Posterior cingulate gyrus (tissue), 11 donors: ENCODE measurements at regions of chr2 and their contacts with region 1.

Region 1: GRCh38 chr2:96509114-96509846 is 4.1 kb upstream of the NEURL3 start:
- DNase-seq: peak; percentile 78 to 98 (median 91)

Region 2: GRCh38 chr2:95578539-95578938 is 930.7 kb before region 1 on chr2:
- intact Hi-C with region 1: no loop called
- DNase-seq: no peak

Region 3: GRCh38 chr2:96305091-96305978 is 203.9 kb before region 1 on chr2 and contains the start of gene SNRNP200:
- intact Hi-C with region 1: loop called (anchors 1 kb)
- DNase-seq: peak; percentile 86 to 99 (median 92)

Region 4: GRCh38 chr2:96359310-96359709 is 150.0 kb before region 1 on chr2:
- intact Hi-C with region 1: loop called (anchors 1 kb)
- DNase-seq: peak; percentile 35 to 95 (median 72)

Region 5: GRCh38 chr2:96407041-96407918 is 102.0 kb before region 1 on chr2:
- intact Hi-C with region 1: loop called (anchors 1 kb)
- DNase-seq: peak; percentile 57 to 96 (median 70)

Region 6: DNA sequence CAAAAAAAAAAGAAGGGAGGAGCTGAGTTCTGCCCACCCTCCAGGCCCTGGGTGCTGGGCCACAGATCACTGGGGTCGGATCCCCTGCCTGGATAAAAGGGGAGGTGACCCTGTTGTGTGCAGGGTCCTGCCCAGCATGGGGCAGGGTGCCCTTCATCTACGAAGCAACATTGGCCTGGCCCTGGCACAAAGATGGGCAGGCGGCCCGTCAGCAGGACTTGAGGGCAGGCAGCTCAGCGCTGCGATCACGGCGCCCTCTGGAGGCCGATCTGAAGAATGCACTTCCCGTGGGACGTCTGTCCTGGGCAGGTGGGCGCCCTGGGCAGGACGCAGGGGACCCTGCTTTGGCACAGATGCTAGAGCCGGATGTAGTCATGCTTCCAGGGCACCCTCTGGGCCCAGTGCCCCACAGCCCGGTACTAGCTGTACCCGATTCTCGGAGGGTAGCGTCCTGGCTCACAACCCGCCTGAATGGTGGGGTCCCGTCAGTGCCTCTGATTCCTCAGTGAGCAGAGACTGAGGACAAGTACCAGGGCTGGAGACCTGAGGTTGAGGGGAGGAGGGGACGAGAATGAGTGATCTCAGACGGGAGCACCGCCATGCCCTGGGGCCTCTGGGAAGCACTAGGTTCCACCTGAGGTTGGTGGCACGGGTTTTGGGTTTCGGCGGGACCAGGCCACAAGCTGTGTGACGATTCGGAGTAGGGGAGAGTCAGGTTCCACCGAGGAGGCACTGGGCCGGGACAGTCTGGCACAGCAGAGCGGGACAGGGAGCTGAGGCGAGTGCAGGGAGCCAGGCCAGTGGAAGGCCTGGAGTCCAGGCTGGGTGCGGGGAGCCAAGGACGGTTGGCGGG is 45.2 kb after region 1 on chr2:
- intact Hi-C with region 1: loop called (anchors 1 kb)
- DNase-seq: peak; percentile 55 to 97 (median 78)

Region 7: GRCh38 chr2:96565111-96565510 is 55.8 kb after region 1 on chr2:
- intact Hi-C with region 1: no loop called
- DNase-seq: no peak

Region 8: GRCh38 chr2:96739633-96740428 is 230.6 kb after region 1 on chr2 and contains the start of gene LMAN2L:
- intact Hi-C with region 1: no loop called
- DNase-seq: peak; percentile 93 to 100 (median 97)